ENCODE measurements at regions of chr10 and their contacts with region 1.

Region 1: DNA sequence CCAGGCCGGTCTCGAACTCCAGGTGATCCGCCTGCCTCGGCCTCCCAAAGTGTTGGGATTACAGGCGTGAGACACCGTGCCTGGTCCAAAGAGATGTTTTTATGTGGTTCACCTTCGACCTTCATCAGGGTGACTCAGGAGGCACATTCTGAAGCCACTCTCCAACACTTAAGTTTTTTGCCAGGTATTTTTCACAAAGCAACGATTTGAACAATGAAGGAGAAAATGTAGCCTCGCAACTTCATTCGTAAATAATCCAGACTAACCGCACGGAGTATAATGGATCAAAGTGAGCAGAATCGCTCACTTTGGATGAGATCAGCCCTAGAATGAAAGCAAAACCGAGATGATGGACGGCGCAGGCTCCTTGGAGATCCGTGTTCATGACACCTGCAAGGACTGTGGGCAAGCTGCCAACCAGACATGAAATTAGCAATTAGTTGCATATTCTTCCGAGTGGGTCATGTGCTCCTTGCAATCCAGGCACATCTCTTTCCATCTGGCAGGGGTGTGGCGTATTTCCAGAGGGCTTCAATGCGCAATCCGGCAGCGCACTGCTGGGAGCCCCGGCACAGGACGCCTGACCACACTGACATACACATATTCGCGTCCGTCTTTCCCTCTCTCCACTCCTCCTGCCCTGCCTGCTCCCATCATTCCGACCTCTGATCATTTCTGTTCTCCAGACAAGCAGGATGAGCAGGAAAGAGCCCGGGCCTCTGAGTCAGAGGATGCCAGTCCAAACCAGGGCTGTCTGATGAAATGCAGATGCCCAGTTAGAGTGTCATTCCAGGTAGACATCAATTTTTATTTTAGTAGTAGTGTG is 148.4 kb downstream of the KLF6 start:
- DNase-seq: no peak
- ATAC-seq: no peak
- H3K4me3 ChIP-seq: no peak overlapping the region
- H3K4me3 Mint-ChIP-seq: no peak overlapping the region
- H3K27ac ChIP-seq: no peak overlapping the region
- H3K27ac Mint-ChIP-seq: no peak overlapping the region
- H3K4me1 ChIP-seq: no peaks in the 10 kb centered on the region
- H3K4me1 Mint-ChIP-seq: peaks cover 2% of the 10 kb centered on the region
- H3K27me3 ChIP-seq: no peaks in the 10 kb centered on the region
- H3K27me3 Mint-ChIP-seq: peaks cover 2% of the 10 kb centered on the region
- CTCF ChIP-seq: no peak

Region 2: GRCh38 chr10:3648170-3648569 is 11.6 kb after region 1 on chr10:
- CTCF ChIA-PET with region 1: no interaction called
- POLR2A ChIA-PET with region 1: no interaction called
- intact Hi-C with region 1: no loop called
- DNase-seq: no peak
- ATAC-seq: no peak
- H3K4me3 ChIP-seq: no peak overlapping the region
- H3K4me3 Mint-ChIP-seq: no peak overlapping the region
- H3K27ac ChIP-seq: no peak overlapping the region
- H3K27ac Mint-ChIP-seq: no peak overlapping the region
- H3K4me1 ChIP-seq: no peaks in the 10 kb centered on the region
- H3K4me1 Mint-ChIP-seq: peaks cover 5% of the 10 kb centered on the region
- H3K27me3 ChIP-seq: peaks cover 0 to 3% of the 10 kb centered on the region in 2 experiments
- H3K27me3 Mint-ChIP-seq: peaks cover 7% of the 10 kb centered on the region
- CTCF ChIP-seq: no peak

Region 3: GRCh38 chr10:4748491-4749308 is 1112.1 kb after region 1 on chr10:
- CTCF ChIA-PET with region 1: no interaction called
- POLR2A ChIA-PET with region 1: no interaction called
- intact Hi-C with region 1: loop called in 1 of 2 experiments (anchors 5 kb)
- DNase-seq: no peak
- ATAC-seq: no peak
- H3K4me3 ChIP-seq: no peak overlapping the region
- H3K4me3 Mint-ChIP-seq: no peak overlapping the region
- H3K27ac ChIP-seq: no peak overlapping the region
- H3K27ac Mint-ChIP-seq: no peak overlapping the region
- H3K4me1 ChIP-seq: no peaks in the 10 kb centered on the region
- H3K4me1 Mint-ChIP-seq: no peaks in the 10 kb centered on the region
- H3K27me3 ChIP-seq: no peaks in the 10 kb centered on the region
- H3K27me3 Mint-ChIP-seq: peaks cover 23% of the 10 kb centered on the region
- CTCF ChIP-seq: no peak

Measured in CD8-positive, alpha-beta T cell (primary cell).